ENCODE measurements at regions of chr2 and their contacts with region 1.

Region 1: DNA sequence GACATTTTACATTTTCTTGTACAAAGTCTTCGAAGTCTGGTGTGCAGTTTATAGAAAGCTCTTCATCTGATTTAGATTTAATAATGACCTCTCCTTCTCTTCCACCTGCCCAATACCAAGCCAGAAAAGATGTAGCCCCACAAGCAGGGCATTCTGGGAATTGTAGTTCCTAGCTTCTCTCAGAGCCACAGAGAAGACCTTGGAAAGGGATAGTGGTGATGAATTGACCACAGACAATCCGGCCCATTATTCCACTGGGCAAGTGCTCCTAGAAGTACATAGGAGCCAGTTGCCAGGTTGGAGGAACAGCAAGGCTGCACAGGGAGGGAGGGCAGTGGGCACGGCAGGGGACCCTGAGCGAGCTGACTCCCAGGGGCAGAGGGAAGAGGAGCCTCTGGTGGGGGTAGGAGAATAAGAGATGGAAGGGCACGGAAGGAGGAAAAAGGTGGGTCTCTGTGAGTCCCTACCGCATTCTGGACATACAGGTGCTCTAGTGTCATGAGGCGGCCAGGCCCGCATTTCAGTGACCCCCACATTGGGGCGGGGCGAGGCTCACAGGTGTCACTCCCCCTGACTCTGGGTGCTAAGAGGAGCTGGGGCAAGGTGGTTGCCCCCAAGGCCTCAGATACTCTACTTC is 152.5 kb upstream of the HAAO start:
- DNase-seq: no peak
- H3K4me3 ChIP-seq: no peak overlapping the region
- H3K4me3 Mint-ChIP-seq: no peak overlapping the region
- H3K27ac Mint-ChIP-seq: no peak overlapping the region
- H3K4me1 ChIP-seq: peaks cover 52% of the 10 kb centered on the region
- H3K4me1 Mint-ChIP-seq: peaks cover 36% of the 10 kb centered on the region
- H3K27me3 ChIP-seq: no peaks in the 10 kb centered on the region
- H3K27me3 Mint-ChIP-seq: no peaks in the 10 kb centered on the region
- CTCF ChIP-seq: no peak

Region 2: GRCh38 chr2:43024515-43025011 is 79.7 kb after region 1 on chr2:
- CTCF ChIA-PET with region 1: interaction called, 12 read pairs
- POLR2A ChIA-PET with region 1: no interaction called
- intact Hi-C with region 1: loop called (anchors 1 kb)
- DNase-seq: peak; percentile 77 to 82
- H3K4me3 ChIP-seq: no peak overlapping the region
- H3K4me3 Mint-ChIP-seq: no peak overlapping the region
- H3K27ac Mint-ChIP-seq: peak overlapping the region; percentile 36
- H3K4me1 ChIP-seq: peaks cover 38% of the 10 kb centered on the region
- H3K4me1 Mint-ChIP-seq: peaks cover 34% of the 10 kb centered on the region
- H3K27me3 ChIP-seq: no peaks in the 10 kb centered on the region
- H3K27me3 Mint-ChIP-seq: no peaks in the 10 kb centered on the region
- CTCF ChIP-seq: peak; percentile 77 to 92

Region 3: DNA sequence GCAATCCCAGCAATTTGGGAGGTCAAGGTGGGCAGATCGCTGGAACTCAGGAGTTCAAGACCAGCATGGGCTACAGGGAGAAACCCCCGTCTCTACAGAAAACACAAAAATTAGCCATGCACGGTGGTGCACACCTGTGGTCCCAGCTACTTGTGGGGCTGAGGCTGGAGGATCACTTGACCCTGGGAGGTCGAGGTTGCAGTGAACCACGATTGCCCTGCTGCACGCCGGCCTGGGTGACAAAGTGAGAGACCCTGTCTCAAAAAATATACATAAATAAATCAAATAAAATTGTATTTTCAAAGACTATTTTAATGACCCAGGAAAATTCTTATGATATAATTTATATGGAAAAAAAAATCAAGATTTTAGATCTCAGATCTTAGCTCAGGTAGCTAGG is 90.0 kb after region 1 on chr2:
- CTCF ChIA-PET with region 1: no interaction called
- POLR2A ChIA-PET with region 1: no interaction called
- intact Hi-C with region 1: no loop called
- DNase-seq: no peak
- H3K4me3 ChIP-seq: no peak overlapping the region
- H3K4me3 Mint-ChIP-seq: no peak overlapping the region
- H3K27ac Mint-ChIP-seq: no peak overlapping the region
- H3K4me1 ChIP-seq: peaks cover 45% of the 10 kb centered on the region
- H3K4me1 Mint-ChIP-seq: peaks cover 24% of the 10 kb centered on the region
- H3K27me3 ChIP-seq: no peaks in the 10 kb centered on the region
- H3K27me3 Mint-ChIP-seq: no peaks in the 10 kb centered on the region
- CTCF ChIP-seq: no peak

Region 4: DNA sequence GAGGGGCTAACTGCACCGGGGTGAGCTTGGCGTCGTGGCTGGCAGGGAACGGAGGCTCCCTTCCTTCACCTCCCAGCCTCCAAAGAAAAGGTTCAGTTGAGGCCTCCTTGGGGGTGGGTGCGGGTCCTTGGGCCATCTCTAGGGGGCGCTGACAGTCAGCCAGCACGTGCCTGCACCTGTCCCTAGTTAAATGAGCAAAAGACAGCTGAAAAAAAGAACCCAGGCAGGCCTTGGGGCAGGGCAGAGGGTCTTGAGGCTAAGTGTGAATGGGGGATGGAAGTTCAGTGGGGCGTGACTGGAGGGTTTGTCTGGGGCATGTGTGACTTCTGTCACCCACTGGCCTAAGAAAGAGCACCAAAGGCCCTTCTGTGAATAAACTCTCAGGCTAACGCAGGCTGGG is 225.1 kb after region 1 on chr2:
- CTCF ChIA-PET with region 1: no interaction called
- POLR2A ChIA-PET with region 1: no interaction called
- intact Hi-C with region 1: loop called (anchors 10 kb)
- DNase-seq: peak in 1 of 2 experiments; percentile 65
- H3K4me3 ChIP-seq: no peak overlapping the region
- H3K4me3 Mint-ChIP-seq: no peak overlapping the region
- H3K27ac Mint-ChIP-seq: peak overlapping the region; percentile 89
- H3K4me1 ChIP-seq: peaks cover 54% of the 10 kb centered on the region
- H3K4me1 Mint-ChIP-seq: peaks cover 53% of the 10 kb centered on the region
- H3K27me3 ChIP-seq: no peaks in the 10 kb centered on the region
- H3K27me3 Mint-ChIP-seq: no peaks in the 10 kb centered on the region
- CTCF ChIP-seq: peak; percentile 64 to 67

Region 5: DNA sequence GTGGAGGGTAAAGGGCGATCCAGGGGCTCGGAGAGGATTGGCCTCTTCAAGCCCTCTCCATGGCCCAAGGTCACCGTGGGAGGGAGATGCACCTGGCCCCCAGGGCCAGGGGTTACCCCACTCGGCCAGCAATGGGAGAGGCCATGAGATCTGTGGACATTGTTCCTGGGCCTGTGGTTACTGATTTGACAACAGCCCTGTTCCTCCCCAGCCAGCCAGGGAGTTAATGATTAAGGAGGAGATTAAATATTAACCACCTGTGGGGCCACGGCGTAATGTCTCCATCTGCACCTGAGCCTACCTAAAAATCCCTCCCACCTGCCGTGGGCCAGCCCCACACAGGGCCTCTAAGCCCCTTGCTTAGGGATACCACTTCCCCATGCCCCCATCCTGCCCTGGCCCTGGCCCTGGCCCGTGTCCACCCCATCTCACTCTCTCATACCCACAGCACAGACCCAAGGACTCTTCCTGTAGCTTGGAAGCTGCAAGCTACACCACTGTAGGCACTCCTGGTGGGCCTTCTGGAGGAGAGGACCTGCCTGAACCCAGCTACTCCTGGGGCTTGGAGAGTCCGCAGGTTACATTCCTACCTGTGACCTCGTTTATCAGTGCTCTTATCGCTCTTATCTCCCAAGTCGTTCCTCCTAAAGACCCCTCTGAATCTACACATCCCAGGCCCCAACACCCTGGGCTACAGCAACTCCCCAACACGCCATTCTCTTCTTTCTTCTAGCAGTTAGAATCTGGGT is 249.4 kb after region 1 on chr2:
- CTCF ChIA-PET with region 1: no interaction called
- POLR2A ChIA-PET with region 1: no interaction called
- intact Hi-C with region 1: loop called (anchors 1 kb)
- DNase-seq: peak; percentile 97 to 98
- H3K4me3 ChIP-seq: 0 out of 2 replicates have a peak overlapping the region, but pooled peaks have one; percentile 0
- H3K4me3 Mint-ChIP-seq: peak overlapping the region; percentile 67
- H3K27ac Mint-ChIP-seq: peak overlapping the region; percentile 91
- H3K4me1 ChIP-seq: peaks cover 86% of the 10 kb centered on the region
- H3K4me1 Mint-ChIP-seq: peaks cover 60% of the 10 kb centered on the region
- H3K27me3 ChIP-seq: no peaks in the 10 kb centered on the region
- H3K27me3 Mint-ChIP-seq: no peaks in the 10 kb centered on the region
- CTCF ChIP-seq: no peak

Region 6: DNA sequence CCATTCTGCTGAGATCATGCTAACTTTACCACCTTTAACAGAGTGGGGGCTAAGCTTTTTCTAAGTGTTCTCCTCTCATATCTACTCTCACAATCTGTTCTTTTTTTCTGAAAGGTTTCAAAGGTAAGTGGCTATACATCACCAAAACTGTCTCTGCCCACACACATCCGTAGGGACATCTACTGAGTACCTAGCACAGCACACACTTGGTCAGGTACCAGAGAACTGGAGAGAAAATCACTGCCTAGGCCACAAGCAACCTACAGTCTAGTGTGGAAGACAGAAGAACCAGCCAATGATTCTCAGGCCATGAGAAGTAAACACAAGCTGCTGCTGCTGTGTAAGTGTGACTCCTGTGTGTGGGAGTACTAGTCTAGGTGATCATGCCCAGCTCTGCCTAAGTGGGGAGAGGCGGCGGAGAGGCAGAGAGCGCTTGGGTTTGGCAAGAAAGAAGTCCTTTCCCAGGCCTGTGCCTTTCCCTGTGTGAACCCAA is 457.6 kb after region 1 on chr2:
- CTCF ChIA-PET with region 1: no interaction called
- POLR2A ChIA-PET with region 1: no interaction called
- intact Hi-C with region 1: no loop called
- DNase-seq: no peak
- H3K4me3 ChIP-seq: no peak overlapping the region
- H3K4me3 Mint-ChIP-seq: no peak overlapping the region
- H3K27ac Mint-ChIP-seq: no peak overlapping the region
- H3K4me1 ChIP-seq: peaks cover 31% of the 10 kb centered on the region
- H3K4me1 Mint-ChIP-seq: peaks cover 33% of the 10 kb centered on the region
- H3K27me3 ChIP-seq: no peaks in the 10 kb centered on the region
- H3K27me3 Mint-ChIP-seq: no peaks in the 10 kb centered on the region
- CTCF ChIP-seq: no peak

Region 7: GRCh38 chr2:43484323-43484930 is 539.5 kb after region 1 on chr2:
- CTCF ChIA-PET with region 1: interaction called, 3 read pairs
- POLR2A ChIA-PET with region 1: no interaction called
- intact Hi-C with region 1: loop called (anchors 1 kb)
- DNase-seq: peak in 1 of 2 experiments; percentile 57
- H3K4me3 ChIP-seq: no peak overlapping the region
- H3K4me3 Mint-ChIP-seq: no peak overlapping the region
- H3K27ac Mint-ChIP-seq: no peak overlapping the region
- H3K4me1 ChIP-seq: peaks cover 14% of the 10 kb centered on the region
- H3K4me1 Mint-ChIP-seq: peaks cover 34% of the 10 kb centered on the region
- H3K27me3 ChIP-seq: no peaks in the 10 kb centered on the region
- H3K27me3 Mint-ChIP-seq: no peaks in the 10 kb centered on the region
- CTCF ChIP-seq: peak; percentile 28 to 80

Region 8: DNA sequence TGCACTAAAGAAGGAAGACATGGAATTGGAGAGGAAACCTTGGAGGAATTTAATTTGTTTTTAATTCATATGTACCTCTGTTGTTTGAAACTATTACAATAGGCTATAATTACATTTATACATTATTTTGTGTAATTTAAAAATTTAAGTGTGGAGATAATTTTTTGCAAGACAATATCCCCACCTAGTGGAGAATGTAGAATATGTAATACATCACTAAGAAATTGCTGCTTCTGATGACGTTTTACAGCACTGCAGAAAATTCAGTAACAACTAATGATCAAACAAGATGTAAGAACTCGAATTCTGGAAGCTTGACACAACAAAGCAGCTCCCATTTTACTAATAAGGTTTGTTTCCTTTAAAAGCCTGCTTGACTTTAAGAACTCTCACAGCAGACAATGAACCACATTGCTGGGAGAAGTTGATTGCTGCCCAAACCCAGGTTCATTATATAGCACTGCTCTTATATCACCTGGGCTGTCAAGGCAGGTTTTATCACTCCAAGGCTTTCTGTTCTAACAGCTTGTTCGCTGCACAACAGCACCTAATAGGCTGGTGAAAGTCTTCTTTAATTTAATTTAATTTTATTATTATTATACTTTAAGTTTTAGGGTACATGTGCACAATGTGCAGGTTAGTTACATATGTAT is 597.5 kb after region 1 on chr2:
- CTCF ChIA-PET with region 1: no interaction called
- POLR2A ChIA-PET with region 1: no interaction called
- intact Hi-C with region 1: loop called (anchors 1 kb)
- DNase-seq: peak in 1 of 2 experiments; percentile 19
- H3K4me3 ChIP-seq: no peak overlapping the region
- H3K4me3 Mint-ChIP-seq: no peak overlapping the region
- H3K27ac Mint-ChIP-seq: no peak overlapping the region
- H3K4me1 ChIP-seq: peaks cover 3% of the 10 kb centered on the region; the same call in 1 of the 2 replicates
- H3K4me1 Mint-ChIP-seq: no peaks in the 10 kb centered on the region
- H3K27me3 ChIP-seq: no peaks in the 10 kb centered on the region
- H3K27me3 Mint-ChIP-seq: no peaks in the 10 kb centered on the region
- CTCF ChIP-seq: peak; percentile 37 to 68

Measured in Caco-2 (cell line).